ENCODE measurements at regions of chr11 and their contacts with region 1.

Region 1: GRCh38 chr11:17077520-17078401 is at the start of gene RPS13:
- DNase-seq: peak; percentile 99
- H3K4me3 ChIP-seq: peak within 1 kb of the TSS; percentile 93 to 98
- H3K27ac ChIP-seq: peak within 1 kb of the TSS; percentile 93 to 96
- H3K4me1 ChIP-seq: peaks cover 18% of the 10 kb centered on the region
- H3K27me3 ChIP-seq: no peaks in the 10 kb centered on the region
- CTCF ChIP-seq: no peak
- POLR2A ChIP-seq: no peak
- total RNA-seq, gene RPS13: 623 to 957 TPM

Region 2: DNA sequence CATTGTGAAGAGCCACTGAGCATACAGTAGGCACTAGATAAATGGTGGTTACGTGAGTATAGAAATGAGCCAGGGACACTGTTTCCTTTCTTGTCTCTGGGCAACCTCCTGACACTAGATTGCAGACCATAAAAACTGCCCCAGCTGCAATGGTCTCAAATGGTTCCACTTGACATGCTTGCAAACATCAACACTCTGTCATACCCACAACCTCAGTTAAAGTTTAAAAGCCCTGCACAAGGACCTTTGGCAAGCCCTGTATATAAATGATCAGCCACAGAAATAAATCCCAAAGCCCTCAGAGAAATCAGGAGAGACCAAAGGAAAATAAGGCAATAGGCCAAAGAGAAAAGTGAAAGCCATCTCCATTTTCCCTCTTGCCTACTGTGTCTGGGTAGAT is 84.3 kb before region 1 on chr11:
- intact Hi-C with region 1: no loop called
- DNase-seq: no peak
- H3K4me3 ChIP-seq: no peak overlapping the region
- H3K27ac ChIP-seq: no peak overlapping the region
- H3K4me1 ChIP-seq: no peaks in the 10 kb centered on the region
- H3K27me3 ChIP-seq: no peaks in the 10 kb centered on the region
- CTCF ChIP-seq: no peak
- POLR2A ChIP-seq: no peak

Region 3: DNA sequence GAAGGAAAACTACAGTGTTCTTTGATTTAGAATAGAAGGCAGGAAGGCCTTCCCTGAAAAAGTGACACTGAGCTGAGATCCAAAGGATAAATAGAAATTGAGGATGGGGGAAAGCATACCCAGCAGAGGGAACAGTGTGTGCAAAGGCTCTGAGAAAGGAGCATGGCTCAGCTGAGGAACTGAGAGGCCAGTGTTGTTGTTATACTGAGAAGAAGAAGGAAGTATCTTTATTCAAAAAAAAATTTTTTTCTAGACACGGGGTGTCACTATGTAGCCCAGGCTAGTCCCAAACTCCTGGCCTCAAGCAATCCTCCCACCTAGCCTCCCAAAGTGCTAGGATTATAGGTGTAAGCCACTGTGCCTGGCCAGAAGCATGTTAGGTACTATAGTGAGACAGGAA is 133.5 kb after region 1 on chr11:
- intact Hi-C with region 1: loop called (anchors 5 kb)
- DNase-seq: no peak
- H3K4me3 ChIP-seq: no peak overlapping the region
- H3K27ac ChIP-seq: no peak overlapping the region
- H3K4me1 ChIP-seq: peaks cover 12% of the 10 kb centered on the region
- H3K27me3 ChIP-seq: no peaks in the 10 kb centered on the region
- CTCF ChIP-seq: no peak
- POLR2A ChIP-seq: no peak